Naive thymus-derived CD4-positive, alpha-beta T cell (primary cell): ENCODE measurements at regions of chr3 and their contacts with region 1.

Region 1: DNA sequence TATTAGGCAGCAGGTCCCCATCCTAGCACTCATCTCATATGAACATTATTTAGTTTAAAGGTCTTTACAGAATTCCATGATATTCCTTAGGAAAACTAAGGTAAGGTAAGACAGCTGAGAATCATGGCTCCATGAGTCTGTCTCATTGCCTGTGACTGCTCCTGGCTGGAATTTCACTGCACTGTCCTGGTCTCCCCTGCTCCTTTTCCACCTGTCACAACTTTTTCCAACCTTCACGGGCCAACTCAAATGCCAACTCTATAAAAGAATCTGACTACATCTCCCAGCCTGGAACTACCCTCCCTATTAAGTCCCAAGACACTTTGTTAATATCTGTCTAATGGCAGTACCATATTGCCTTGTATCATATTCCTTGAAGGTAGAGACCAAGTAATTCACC is 7.6 kb downstream of the CNBP start:
- DNase-seq: no peak
- ATAC-seq: no peak
- H3K4me3 ChIP-seq: no peak overlapping the region
- H3K4me3 Mint-ChIP-seq: peak overlapping the region; percentile 8 to 98 (median 66)
- H3K27ac ChIP-seq: peak overlapping the region; percentile 100
- H3K27ac Mint-ChIP-seq: peak overlapping the region; percentile 1 to 96 (median 37)
- H3K4me1 ChIP-seq: peaks cover 65 to 71% of the 10 kb centered on the region in 2 donors
- H3K4me1 Mint-ChIP-seq: peaks cover 53 to 96% (median 75%) of the 10 kb centered on the region in 7 donors
- H3K27me3 ChIP-seq: no peaks in the 10 kb centered on the region
- H3K27me3 Mint-ChIP-seq: no peaks in the 10 kb centered on the region

Region 2: DNA sequence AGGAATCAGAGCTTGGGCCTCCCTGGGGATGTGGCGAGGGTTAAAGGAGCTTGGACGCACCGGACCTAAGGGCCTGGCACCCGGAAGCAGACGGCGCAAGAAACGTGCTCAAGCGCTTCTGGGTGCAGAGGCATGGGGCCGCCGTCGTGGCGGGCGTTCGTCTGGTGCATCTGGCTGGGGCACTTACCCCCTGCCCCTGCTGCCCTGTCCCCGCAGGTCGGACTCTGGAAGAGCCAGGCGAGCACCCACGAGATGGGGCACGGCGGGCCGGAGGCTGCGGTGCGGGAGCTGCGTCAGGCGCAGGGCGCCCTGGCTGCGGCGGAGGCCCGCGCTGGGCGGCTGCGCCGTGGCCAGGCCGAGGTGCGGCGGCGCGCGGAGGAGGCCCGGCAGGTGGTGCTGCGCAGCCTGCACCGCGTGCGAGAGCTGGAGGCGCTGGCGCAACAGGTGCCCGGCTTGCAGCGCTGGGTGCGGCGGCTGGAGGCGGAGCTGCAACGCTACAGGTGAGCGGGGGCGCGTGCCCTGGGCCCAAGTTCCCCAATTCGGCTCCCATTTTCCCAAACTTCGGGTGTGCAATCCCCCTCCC is 172.4 kb before region 1 on chr3:
- CTCF ChIA-PET with region 1: no interaction called
- POLR2A ChIA-PET with region 1: no interaction called
- intact Hi-C with region 1: no loop called
- DNase-seq: peak; percentile 46 to 70 (median 62)
- ATAC-seq: peak; percentile 94
- H3K4me3 ChIP-seq: no peak overlapping the region
- H3K4me3 Mint-ChIP-seq: peak overlapping the region; percentile 55 to 84 (median 72)
- H3K27ac ChIP-seq: no peak overlapping the region
- H3K27ac Mint-ChIP-seq: peak overlapping the region in 3 of 9 donors; percentile 19 to 72 (median 68)
- H3K4me1 ChIP-seq: peaks cover 5 to 33% of the 10 kb centered on the region in 2 donors
- H3K4me1 Mint-ChIP-seq: peaks cover 29 to 62% (median 52%) of the 10 kb centered on the region in 7 donors
- H3K27me3 ChIP-seq: peaks cover 5 to 8% of the 10 kb centered on the region in 2 donors
- H3K27me3 Mint-ChIP-seq: peaks cover 13 to 61% (median 24%) of the 10 kb centered on the region in 5 donors

Region 3: DNA sequence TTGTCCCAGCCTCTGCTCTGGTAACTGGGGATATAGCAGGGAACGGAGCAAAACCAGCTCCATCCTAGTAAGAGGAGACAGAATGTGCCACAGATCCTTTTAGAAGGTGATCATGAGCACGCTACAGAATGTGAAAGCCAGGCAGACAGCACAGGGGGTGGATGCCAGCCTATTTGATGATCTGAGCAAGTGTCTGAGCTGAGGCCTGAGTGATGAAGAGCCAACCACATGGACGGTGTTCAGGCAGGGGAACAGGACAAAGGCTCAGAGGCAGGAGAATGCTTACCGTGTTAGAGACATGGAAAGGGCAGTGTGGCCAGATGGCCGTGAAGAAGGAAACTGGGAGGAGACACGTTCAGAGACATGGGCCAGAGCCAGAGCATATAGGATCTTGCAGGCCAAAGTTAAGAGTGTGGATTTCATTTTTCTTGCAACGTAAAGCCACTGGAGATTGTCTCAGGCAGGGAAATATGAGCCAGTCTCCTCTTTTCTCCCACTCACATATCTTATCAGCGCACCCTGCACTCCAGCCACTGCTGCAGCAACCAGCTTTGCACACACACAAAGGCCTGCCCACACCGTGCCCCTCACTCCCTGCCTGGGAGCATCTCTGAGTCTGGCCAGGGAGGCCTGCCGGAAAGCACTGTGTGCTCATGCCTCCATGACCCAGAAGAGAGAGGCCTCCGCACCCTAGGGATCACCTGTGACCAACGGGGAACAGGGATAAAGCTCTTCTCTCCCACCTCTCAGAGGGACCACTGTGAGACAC is 74.5 kb before region 1 on chr3:
- CTCF ChIA-PET with region 1: no interaction called
- POLR2A ChIA-PET with region 1: no interaction called
- intact Hi-C with region 1: no loop called
- DNase-seq: no peak
- ATAC-seq: no peak
- H3K4me3 ChIP-seq: no peak overlapping the region
- H3K4me3 Mint-ChIP-seq: peak overlapping the region in 8 of 10 donors; percentile 11 to 78 (median 55)
- H3K27ac ChIP-seq: peak overlapping the region; percentile 59
- H3K27ac Mint-ChIP-seq: peak overlapping the region; percentile 65 to 95 (median 84)
- H3K4me1 ChIP-seq: peaks cover 3 to 62% of the 10 kb centered on the region in 2 donors
- H3K4me1 Mint-ChIP-seq: peaks cover 54 to 93% (median 78%) of the 10 kb centered on the region in 7 donors
- H3K27me3 ChIP-seq: no peaks in the 10 kb centered on the region
- H3K27me3 Mint-ChIP-seq: no peaks in the 10 kb centered on the region

Region 4: DNA sequence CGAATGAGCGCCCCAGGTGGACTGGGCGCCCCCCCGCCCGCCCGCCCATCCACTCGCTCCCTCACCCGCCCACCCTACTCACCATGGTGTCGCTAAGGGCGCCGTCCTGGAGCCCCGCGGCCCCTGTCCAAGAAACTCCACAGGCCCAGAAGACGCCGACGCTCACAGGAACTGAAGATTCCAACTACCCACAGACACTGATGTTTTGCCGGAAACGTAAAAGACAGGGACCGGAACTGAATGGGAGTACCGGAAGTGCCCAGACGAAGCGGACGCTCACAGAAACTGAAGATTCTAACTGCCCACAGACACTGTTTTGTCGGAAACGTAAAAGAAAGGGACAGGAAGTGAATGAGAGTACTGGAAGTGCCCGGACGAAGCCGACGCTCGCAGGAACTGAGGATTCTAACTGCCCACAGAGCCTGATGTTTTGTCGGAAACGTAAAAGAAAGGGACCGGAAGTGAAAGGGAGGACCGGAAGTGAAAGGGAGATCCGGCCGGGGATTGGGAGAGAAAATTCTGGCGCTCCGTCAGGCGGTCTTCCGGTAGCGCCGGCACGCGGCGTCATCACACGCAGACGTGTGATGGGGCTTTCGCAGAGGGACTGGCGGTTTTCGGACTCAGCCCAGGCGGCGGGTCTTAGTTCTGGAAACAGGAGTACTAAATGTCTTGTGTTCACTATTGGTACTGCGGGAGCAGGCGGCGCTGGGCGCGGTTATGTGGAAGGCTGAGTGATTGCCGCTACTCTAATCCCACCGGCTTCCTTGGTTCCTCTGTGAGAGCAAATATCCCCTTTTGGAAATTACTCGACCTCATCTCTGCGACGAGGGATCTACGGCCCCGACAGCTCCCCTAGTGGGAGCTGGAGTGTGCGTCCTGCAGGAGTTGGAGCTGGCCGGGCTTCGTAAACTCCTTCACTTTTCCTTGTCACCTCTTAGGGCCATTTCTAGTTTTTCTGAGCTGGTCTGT is 14.9 kb before region 1 on chr3 and contains the start of gene ISY1:
- CTCF ChIA-PET with region 1: interaction called, 3 read pairs
- POLR2A ChIA-PET with region 1: interaction called, 33 read pairs
- intact Hi-C with region 1: no loop called
- DNase-seq: peak; percentile 68 to 92 (median 89)
- ATAC-seq: peak; percentile 90
- H3K4me3 ChIP-seq: peak within 1 kb of the TSS; percentile 94
- H3K4me3 Mint-ChIP-seq: peak within 1 kb of the TSS; percentile 84 to 100 (median 98)
- H3K27ac ChIP-seq: peak within 1 kb of the TSS; percentile 98
- H3K27ac Mint-ChIP-seq: peak within 1 kb of the TSS; percentile 97 to 100 (median 99)
- H3K4me1 ChIP-seq: peaks cover 22 to 24% of the 10 kb centered on the region in 2 donors
- H3K4me1 Mint-ChIP-seq: peaks cover 18 to 53% (median 40%) of the 10 kb centered on the region in 7 donors
- H3K27me3 ChIP-seq: no peaks in the 10 kb centered on the region
- H3K27me3 Mint-ChIP-seq: peaks cover 0 to 4% (median 0%) of the 10 kb centered on the region in 5 donors
- total RNA-seq, gene ISY1: 27.6 to 65.1 (median 37.4) TPM

Region 5: GRCh38 chr3:129289201-129289921 is 113.3 kb after region 1 on chr3:
- CTCF ChIA-PET with region 1: no interaction called
- POLR2A ChIA-PET with region 1: no interaction called
- intact Hi-C with region 1: no loop called
- DNase-seq: no peak
- ATAC-seq: no peak
- H3K4me3 ChIP-seq: no peak overlapping the region
- H3K4me3 Mint-ChIP-seq: no peak overlapping the region
- H3K27ac ChIP-seq: no peak overlapping the region
- H3K27ac Mint-ChIP-seq: peak overlapping the region in 3 of 9 donors; percentile 43 to 84 (median 47)
- H3K4me1 ChIP-seq: no peaks in the 10 kb centered on the region
- H3K4me1 Mint-ChIP-seq: peaks cover 13 to 37% (median 23%) of the 10 kb centered on the region in 7 donors
- H3K27me3 ChIP-seq: no peaks in the 10 kb centered on the region
- H3K27me3 Mint-ChIP-seq: no peaks in the 10 kb centered on the region